H1 (cell line): ENCODE measurements at regions of chr1 and their contacts with region 1.

Region 1: DNA sequence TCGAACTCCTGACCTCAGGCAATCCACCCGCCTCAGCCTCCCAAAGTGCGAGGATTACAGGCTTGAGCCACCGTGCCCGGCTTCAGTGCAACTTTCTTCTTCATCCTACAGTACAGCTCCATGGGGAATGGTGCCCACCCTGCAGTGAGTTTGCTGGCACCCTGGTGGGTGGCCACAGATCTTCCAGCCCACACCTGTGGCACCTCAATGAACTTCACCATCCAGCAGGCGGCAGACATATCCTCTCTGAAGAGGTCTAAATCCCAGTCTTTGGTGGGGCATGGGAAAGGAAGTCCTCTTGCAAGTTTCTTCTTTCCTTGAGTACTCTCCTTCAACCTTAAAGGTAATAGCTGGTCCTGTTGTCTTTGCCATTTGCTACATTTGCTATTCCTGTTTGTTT is 18.1 kb upstream of the ZBTB8A start:
- DNase-seq: no peak
- H3K4me3 ChIP-seq: no peak overlapping the region; a peak in 1 of 8 replicates
- H3K27ac ChIP-seq: no peak overlapping the region
- H3K4me1 ChIP-seq: no peaks in the 10 kb centered on the region
- H3K27me3 ChIP-seq: no peaks in the 10 kb centered on the region
- CTCF ChIP-seq: peak; percentile 12 to 36 (median 14); a peak in 3 of 4 replicates
- EP300 ChIP-seq: no peak
- POLR2A ChIP-seq: no peak
- RAD21 ChIP-seq: peak; percentile 24 to 46

Region 2: DNA sequence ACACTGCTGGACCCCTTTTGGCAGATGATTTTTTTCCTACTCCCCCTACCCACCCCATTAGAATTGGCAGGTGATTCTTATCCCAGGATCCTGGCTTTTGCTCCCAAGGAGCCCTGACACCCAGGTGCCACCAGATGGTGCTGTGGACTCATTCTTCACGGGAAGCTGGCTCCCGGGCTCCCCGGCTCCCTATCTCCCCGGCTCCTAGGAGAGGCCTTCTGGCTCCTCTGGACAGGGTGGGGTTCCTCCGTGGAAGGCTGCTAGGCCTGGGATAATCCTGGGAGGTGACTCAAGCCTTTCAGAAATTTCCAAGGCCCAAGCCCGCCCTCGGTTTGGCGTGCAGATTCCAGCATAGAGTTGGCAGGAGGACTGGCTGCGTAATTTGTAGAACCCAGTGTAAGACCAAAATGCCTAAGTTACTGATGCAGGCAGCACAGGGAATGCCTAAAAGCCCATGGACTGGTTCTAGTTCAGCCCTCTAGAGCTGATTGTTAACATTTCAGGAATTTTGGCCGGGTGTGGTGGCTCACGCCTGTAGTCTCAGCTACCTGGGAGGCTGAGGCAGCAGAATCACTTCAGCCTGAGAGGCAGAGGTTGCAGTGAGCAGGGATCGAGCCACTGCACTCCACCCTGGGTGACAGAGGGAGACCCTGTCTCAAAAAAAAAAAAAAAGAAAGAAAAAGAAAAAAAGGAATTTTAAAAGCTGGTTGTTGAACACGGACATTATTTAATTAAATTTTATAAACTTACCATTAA is 120.1 kb before region 1 on chr1:
- CTCF ChIA-PET with region 1: interaction called, 30 read pairs
- POLR2A ChIA-PET with region 1: no interaction called
- DNase-seq: peak in 1 of 2 experiments; percentile 91
- H3K4me3 ChIP-seq: no peak overlapping the region
- H3K27ac ChIP-seq: no peak overlapping the region
- H3K4me1 ChIP-seq: no peaks in the 10 kb centered on the region; a peak in 1 of 7 replicates
- H3K27me3 ChIP-seq: no peaks in the 10 kb centered on the region
- CTCF ChIP-seq: peak; percentile 79 to 93 (median 88)
- EP300 ChIP-seq: peak in 1 of 2 experiments; percentile 24; a peak in 1 of 3 replicates
- POLR2A ChIP-seq: no peak
- RAD21 ChIP-seq: peak; percentile 96 to 99

Region 3: GRCh38 chr1:32508751-32509140 is 12.4 kb before region 1 on chr1:
- CTCF ChIA-PET with region 1: interaction called, 15 read pairs
- POLR2A ChIA-PET with region 1: no interaction called
- DNase-seq: no peak
- H3K4me3 ChIP-seq: no peak overlapping the region
- H3K27ac ChIP-seq: no peak overlapping the region
- H3K4me1 ChIP-seq: no peaks in the 10 kb centered on the region
- H3K27me3 ChIP-seq: no peaks in the 10 kb centered on the region
- CTCF ChIP-seq: no peak; a peak in 1 of 4 replicates
- EP300 ChIP-seq: no peak
- POLR2A ChIP-seq: no peak
- RAD21 ChIP-seq: no peak

Region 4: DNA sequence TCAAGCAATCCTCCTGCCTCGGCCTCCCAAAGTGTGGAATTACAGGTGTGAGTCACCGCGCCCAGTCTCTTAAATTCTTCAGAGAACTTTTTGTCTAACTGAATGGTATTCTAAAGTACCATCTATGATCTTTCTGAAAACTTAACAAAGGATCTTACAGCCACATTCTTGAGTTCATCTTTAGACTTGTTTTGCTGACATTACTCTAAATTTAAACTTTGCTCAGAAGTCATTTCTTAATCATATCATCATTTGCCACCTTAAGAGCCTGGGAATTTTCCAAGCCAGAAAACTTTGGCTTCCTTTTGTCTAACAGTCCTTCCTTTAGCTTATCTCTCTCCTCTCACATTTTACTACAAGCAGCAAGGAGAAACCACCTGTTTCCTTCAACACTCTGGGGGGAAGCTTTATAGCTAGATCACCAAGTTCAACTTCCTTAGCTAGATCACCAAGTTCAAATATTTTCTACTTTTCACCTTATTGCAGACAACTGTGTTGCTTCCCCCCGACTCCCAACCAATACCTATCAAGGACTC is 12.7 kb after region 1 on chr1:
- CTCF ChIA-PET with region 1: interaction called, 15 read pairs
- POLR2A ChIA-PET with region 1: interaction called, 6 read pairs
- DNase-seq: no peak
- H3K4me3 ChIP-seq: no peak overlapping the region
- H3K27ac ChIP-seq: no peak overlapping the region
- H3K4me1 ChIP-seq: peaks cover 0 to 2% (median 0%) of the 10 kb centered on the region in 4 experiments; a peak in 1 of 7 replicates
- H3K27me3 ChIP-seq: no peaks in the 10 kb centered on the region
- CTCF ChIP-seq: no peak
- EP300 ChIP-seq: no peak
- POLR2A ChIP-seq: no peak
- RAD21 ChIP-seq: no peak

Region 5: GRCh38 chr1:32538887-32539583 is 17.9 kb after region 1 on chr1 and contains the start of gene ZBTB8A:
- CTCF ChIA-PET with region 1: interaction called, 15 read pairs
- POLR2A ChIA-PET with region 1: interaction called, 9 read pairs
- DNase-seq: peak; percentile 15 to 73
- H3K4me3 ChIP-seq: peak within 1 kb of the TSS; percentile 74 to 95 (median 78)
- H3K27ac ChIP-seq: peak within 1 kb of the TSS; percentile 83; the same call in 1 of the 2 replicates
- H3K4me1 ChIP-seq: peaks cover 0 to 2% (median 1%) of the 10 kb centered on the region in 4 experiments; a peak in 5 of 7 replicates
- H3K27me3 ChIP-seq: no peaks in the 10 kb centered on the region; a peak in 1 of 7 replicates
- CTCF ChIP-seq: no peak
- EP300 ChIP-seq: no peak
- POLR2A ChIP-seq: peak in 1 of 2 experiments; percentile 58; a peak in 1 of 3 replicates
- RAD21 ChIP-seq: no peak
- total RNA-seq, gene ZBTB8A: 8.9 and 10.4 TPM in 2 replicates

Region 6: DNA sequence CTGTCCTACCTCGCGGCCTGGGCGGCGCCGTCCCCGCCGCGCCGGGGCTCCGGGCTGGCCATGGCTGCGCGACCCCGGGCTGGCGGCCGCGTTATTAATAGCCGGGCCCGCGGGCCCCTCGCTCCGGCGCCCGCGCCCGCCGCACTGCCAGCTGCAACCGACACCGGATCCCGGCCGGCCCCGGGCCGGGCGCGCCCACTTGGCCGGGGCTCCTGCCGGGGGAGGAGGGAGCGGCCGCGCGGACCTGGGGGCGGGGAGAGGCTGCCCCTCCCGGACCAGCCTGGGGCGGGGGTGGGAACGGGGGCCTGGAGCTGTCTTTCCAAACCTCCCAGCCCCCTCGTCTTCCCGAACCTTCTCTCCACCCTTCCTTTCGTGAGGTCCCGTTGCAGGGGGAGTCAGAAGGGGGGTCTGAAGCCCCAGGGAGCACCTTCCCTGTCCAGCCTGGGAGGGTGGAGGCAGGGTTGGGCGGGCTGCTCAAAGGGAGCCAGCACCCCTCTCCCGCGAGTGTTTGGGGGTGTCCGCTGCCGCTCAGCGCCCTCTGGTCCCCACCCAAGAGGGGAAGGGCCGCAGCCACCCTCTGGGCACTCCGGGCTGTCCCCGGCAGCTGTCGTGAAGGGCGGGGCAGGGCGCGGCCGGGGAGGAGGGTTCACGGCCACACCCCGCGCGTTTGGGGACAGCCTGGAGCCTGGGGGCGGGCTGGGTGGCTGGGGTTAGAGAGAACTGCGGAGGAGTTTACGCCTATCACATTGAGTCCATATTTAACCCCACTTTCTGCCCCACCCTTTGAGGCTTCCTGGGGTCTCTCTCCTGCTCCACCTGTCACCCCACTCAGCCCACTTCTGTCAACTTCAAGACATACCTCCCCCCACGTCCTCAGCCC is 181.7 kb after region 1 on chr1 and contains the start of gene SYNC:
- CTCF ChIA-PET with region 1: interaction called, 11 read pairs
- POLR2A ChIA-PET with region 1: no interaction called
- DNase-seq: no peak
- H3K4me3 ChIP-seq: peak within 1 kb of the TSS; percentile 29 to 69 (median 46)
- H3K27ac ChIP-seq: no peak within 1 kb of the TSS
- H3K4me1 ChIP-seq: peaks cover 0 to 15% (median 6%) of the 10 kb centered on the region in 4 experiments; a peak in 6 of 7 replicates
- H3K27me3 ChIP-seq: peaks cover 5 to 35% (median 29%) of the 10 kb centered on the region in 4 experiments
- CTCF ChIP-seq: no peak
- EP300 ChIP-seq: no peak
- POLR2A ChIP-seq: no peak
- RAD21 ChIP-seq: no peak
- total RNA-seq, gene SYNC: 0.17 TPM in 1 of 2 replicates, not detected in the other